Mammary epithelial cell (primary cell): ENCODE measurements at regions of chr2 and their contacts with region 1.

Region 1: DNA sequence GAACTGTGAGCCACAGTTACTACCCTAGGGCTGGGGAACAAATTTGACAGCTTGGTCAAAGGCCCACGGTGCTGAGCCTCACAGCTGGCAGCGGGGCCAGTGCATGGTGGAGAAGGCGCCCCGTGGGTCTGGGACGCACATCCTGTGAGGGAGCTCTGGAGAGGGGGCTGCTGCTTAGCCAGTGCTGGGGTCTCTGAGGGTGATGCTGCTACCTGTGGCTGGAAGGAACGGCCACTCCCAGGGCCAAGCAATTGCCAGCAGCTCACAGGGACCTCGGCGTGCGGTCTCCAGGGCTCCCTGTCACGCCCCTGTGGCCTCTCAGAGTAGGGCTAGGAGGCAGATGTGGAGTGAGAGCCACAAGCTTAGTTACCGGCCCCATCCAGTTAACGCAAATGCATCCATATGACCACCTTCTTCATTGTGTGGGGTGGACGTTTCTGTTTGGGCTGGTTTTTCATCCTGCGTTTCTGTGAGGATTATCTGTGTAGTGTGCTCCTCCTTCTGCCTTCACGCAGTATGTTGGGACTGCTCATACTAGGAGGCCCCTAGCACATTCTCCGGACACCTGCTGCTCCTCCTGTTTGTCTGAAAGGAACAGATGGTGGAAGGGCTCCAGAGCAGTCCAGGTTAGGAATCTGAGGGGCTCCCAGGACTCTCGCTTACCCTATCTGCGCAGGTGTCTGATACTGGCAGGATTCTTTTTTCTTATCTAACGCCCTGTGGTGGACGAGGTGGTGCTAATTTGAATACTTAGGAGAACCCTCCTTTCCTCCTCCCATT is 26.0 kb downstream of the STK25 start:
- DNase-seq: no peak
- H3K4me3 ChIP-seq: no peak overlapping the region
- H3K27ac ChIP-seq: no peak overlapping the region
- H3K4me1 ChIP-seq: no peaks in the 10 kb centered on the region
- H3K27me3 ChIP-seq: no peaks in the 10 kb centered on the region
- CTCF ChIP-seq: no peak

Region 2: DNA sequence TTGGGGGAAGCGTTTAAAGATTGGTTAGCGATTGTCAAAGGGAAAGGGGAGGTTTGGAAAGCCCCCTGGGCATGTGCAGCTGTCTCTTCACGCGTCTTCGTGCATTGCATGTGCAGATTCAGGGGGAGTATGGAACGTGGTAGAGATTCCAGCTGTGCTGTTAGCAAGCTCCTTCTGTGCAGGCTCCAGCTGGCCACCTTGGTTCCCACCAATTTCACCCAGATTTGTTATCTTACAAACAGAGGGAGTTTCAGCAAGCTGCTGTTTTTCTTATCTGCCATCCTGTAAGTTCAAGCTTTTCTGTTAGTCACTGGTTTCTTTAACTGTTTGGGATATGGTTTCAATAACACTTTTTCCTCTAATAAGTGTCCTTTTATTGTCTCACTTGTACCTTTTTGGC is 95.8 kb before region 1 on chr2:
- CTCF ChIA-PET with region 1: no interaction called
- dilution Hi-C with region 1: loop called (anchors 5 kb)
- in situ Hi-C with region 1: no loop called
- intact Hi-C with region 1: no loop called
- DNase-seq: no peak
- H3K4me3 ChIP-seq: no peak overlapping the region
- H3K27ac ChIP-seq: no peak overlapping the region
- H3K4me1 ChIP-seq: peaks cover 19% of the 10 kb centered on the region
- H3K27me3 ChIP-seq: no peaks in the 10 kb centered on the region
- CTCF ChIP-seq: no peak

Region 3: GRCh38 chr2:241432824-241433448 is 49.4 kb before region 1 on chr2:
- CTCF ChIA-PET with region 1: no interaction called
- dilution Hi-C with region 1: loop called (anchors 5 kb)
- in situ Hi-C with region 1: no loop called
- intact Hi-C with region 1: no loop called
- DNase-seq: no peak
- H3K4me3 ChIP-seq: no peak overlapping the region
- H3K27ac ChIP-seq: no peak overlapping the region
- H3K4me1 ChIP-seq: no peaks in the 10 kb centered on the region
- H3K27me3 ChIP-seq: no peaks in the 10 kb centered on the region
- CTCF ChIP-seq: no peak

Region 4: GRCh38 chr2:241558532-241559322 is 76.4 kb after region 1 on chr2 and contains the start of gene BOK:
- CTCF ChIA-PET with region 1: no interaction called
- dilution Hi-C with region 1: loop called (anchors 5 kb)
- in situ Hi-C with region 1: no loop called
- intact Hi-C with region 1: no loop called
- DNase-seq: peak; percentile 59
- H3K4me3 ChIP-seq: peak within 1 kb of the TSS; percentile 67 to 88 (median 70)
- H3K27ac ChIP-seq: peak within 1 kb of the TSS; percentile 28
- H3K4me1 ChIP-seq: peaks cover 44% of the 10 kb centered on the region
- H3K27me3 ChIP-seq: no peaks in the 10 kb centered on the region
- CTCF ChIP-seq: no peak
- total RNA-seq, gene BOK: 21.3 to 38.5 TPM

Region 5: GRCh38 chr2:241584423-241584822 is 102.1 kb after region 1 on chr2:
- CTCF ChIA-PET with region 1: no interaction called
- dilution Hi-C with region 1: loop called (anchors 5 kb)
- in situ Hi-C with region 1: no loop called
- intact Hi-C with region 1: no loop called
- DNase-seq: peak; percentile 16
- H3K4me3 ChIP-seq: no peak overlapping the region
- H3K27ac ChIP-seq: no peak overlapping the region
- H3K4me1 ChIP-seq: no peaks in the 10 kb centered on the region
- H3K27me3 ChIP-seq: no peaks in the 10 kb centered on the region
- CTCF ChIP-seq: no peak

Region 6: DNA sequence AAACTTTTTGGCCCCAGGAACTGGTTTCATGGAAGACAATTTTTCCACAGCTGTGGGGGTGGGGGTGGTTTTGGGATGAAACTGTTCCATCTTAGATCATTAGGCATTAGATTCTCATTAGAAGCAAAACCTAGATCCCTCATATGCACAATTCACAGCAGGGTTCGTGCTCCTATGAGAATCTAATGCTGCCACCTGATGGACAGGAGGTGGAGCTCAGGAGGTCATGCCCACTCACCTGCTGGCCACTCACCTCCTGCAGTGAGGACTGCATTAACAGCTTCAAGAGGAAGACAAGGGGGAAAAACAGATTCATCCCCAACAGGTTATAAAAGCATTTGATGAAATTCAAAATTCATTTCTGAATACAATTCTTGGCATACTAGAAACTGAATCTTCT is 116.1 kb after region 1 on chr2:
- CTCF ChIA-PET with region 1: no interaction called
- dilution Hi-C with region 1: no loop called
- in situ Hi-C with region 1: no loop called
- intact Hi-C with region 1: no loop called
- DNase-seq: peak; percentile 11
- H3K4me3 ChIP-seq: no peak overlapping the region
- H3K27ac ChIP-seq: no peak overlapping the region
- H3K4me1 ChIP-seq: no peaks in the 10 kb centered on the region
- H3K27me3 ChIP-seq: no peaks in the 10 kb centered on the region
- CTCF ChIP-seq: peak; percentile 22 to 51